GM13976 (cell line): ENCODE measurements at regions of chr3 and their contacts with region 1.

Region 1: GRCh38 chr3:98817547-98818041 is 54.5 kb downstream of the ST3GAL6 start:
- DNase-seq: peak; percentile 46
- CTCF ChIP-seq: peak; percentile 34

Region 2: DNA sequence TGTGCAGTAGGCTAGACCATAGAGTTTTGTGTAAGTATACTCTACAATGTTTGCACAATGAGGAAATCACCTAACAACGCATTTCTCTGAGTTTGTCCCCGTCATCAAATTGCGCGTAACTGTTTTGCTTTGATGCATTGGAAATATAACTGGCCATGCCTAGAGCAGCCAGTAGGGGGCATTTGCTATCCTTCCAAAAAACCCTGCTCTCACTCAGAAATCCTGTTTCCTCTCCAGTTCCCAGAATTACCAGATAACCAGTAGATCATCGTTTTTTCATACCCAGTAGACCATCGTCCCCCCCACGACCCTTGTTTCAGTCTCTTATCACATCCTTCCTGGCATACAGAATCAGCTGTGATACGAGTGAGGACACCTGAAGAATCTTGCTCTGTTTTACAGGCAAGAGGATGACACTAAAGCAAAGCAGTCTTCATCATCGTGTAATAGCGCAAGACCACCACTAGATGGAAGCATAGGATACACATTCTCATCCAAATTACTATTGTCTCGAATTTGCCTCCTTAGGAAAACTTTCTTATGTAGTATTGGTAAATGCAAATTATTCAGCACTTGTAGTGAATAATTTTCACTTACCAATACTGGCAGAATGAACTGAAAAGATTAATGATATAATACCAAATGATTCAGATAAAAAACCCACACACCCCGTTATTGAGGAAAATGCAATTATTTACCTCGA is 778.1 kb before region 1 on chr3:
- in situ Hi-C with region 1: loop called (anchors 25 kb)
- DNase-seq: peak; percentile 42
- CTCF ChIP-seq: peak; percentile 84

Region 3: GRCh38 chr3:98329392-98330124 is 488.0 kb before region 1 on chr3:
- in situ Hi-C with region 1: loop called (anchors 25 kb)
- DNase-seq: peak; percentile 41
- CTCF ChIP-seq: peak; percentile 81

Region 4: DNA sequence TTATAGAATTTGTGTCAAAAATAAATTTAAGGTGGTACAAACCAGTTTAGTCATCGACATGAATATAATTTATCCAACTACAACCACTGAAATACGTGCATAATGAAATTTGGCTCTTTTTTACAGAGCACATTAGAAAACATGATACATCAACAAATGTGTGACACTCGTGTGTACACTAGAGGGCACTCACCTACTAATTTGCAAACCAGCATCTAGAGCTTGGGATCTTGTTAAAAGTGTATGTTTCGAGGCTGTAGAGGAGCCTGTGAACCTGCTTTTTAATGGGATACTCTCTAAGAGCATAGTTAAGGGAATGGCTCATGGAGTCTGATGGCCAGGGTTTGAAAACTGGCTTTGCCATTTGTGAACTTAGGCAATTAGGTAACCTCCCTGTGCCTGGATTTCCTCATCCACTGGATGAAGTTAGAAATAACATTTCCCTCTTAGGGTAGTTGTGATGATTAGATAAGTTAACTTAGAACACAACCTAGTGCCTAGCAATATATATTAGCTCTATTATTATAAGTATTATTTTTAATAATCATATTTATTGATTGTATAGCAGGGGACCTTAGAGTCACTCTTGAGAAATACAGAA is 215.4 kb before region 1 on chr3:
- in situ Hi-C with region 1: loop called (anchors 5 kb)
- DNase-seq: peak; percentile 52
- CTCF ChIP-seq: peak; percentile 66

Region 5: DNA sequence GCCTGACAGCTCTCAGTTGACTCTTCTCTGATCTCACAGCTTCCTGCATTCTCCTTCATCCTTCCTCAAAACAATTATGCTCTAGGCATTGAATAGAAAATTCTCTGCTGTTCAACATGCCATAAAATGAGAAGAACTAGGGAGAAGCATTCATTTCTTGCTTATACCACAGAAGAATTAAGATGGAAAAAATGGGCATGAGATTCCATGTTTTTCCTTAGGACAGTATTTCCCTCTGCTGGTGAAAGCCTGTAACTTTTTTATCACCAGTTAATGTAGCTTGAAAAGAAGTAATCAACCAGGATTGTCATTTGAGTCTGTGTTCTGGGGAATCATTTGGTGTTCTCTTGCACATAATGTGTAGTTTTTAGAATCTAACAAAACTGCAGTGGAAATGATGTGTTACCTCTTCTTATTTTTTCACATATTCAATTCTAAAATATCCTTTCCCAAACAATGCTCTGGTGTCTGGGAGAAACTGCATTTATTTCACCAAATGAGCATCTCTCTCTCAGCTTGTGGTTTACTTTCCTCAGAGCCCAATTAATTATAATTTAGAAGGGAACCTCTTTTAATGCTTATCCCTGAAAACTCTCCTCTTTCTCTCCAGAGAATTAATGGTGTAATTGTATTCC is 176.7 kb after region 1 on chr3:
- in situ Hi-C with region 1: loop called (anchors 5 kb)
- DNase-seq: no peak
- CTCF ChIP-seq: no peak

Region 6: GRCh38 chr3:99172736-99173657 is 355.4 kb after region 1 on chr3:
- in situ Hi-C with region 1: loop called (anchors 25 kb)
- DNase-seq: peak; percentile 37
- CTCF ChIP-seq: peak; percentile 76

Region 7: GRCh38 chr3:99246010-99246654 is 428.5 kb after region 1 on chr3:
- in situ Hi-C with region 1: no loop called
- DNase-seq: no peak
- CTCF ChIP-seq: no peak